Esophagus squamous epithelium (tissue), 5 donors: ENCODE measurements at regions of chr12 and their contacts with region 1.

Region 1: DNA sequence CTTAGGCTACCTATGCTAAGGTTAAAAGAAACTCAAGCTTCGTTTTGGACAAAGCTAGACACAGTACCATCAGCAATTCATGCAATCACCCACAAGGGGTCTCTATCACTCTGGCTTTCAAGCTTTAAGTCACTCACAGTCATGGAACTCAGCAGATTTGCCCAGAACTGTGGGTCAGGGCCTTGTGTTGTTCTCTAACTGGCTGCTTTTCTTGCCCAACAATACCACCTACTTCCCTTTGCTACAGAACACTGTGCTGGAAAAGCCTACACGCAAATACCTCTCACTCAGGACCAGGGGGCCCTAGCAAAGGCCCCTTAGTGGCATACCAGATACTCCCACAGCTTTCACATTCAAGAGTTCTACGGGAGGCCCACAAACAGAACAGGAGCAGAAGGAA is 9.1 kb downstream of the NEMP1 start:
- DNase-seq: no peak
- H3K4me3 ChIP-seq: no peak overlapping the region
- H3K27ac ChIP-seq: peak overlapping the region; percentile 41 to 79 (median 76)
- H3K4me1 ChIP-seq: peaks cover 6 to 37% (median 11%) of the 10 kb centered on the region in 3 donors
- H3K27me3 ChIP-seq: no peaks in the 10 kb centered on the region
- CTCF ChIP-seq: peak; percentile 76 to 95 (median 90)
- POLR2A ChIP-seq: no peak

Region 2: DNA sequence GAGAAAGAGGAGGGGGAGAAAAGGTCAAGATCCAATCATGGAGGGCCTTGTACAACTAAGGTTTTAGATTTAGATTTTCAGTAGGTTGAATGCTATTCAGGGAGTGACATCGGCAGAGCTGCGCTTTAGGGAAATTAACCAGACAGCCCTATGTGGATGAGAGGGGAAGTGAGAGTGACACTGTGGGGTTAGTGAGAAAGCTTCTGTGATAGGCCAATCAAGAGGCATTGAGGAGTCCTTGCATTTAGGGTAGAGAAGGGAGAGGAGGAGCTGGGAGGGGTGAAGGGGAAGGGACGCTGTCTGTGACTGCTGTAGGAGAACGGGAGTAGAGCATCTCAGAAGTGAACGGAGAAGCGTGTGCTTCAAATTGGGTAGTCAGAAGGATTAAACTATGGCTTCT is 303.0 kb before region 1 on chr12:
- intact Hi-C with region 1: loop called (anchors 10 kb)
- DNase-seq: no peak
- H3K4me3 ChIP-seq: peak overlapping the region in 1 of 4 donors; percentile 1
- H3K27ac ChIP-seq: no peak overlapping the region
- H3K4me1 ChIP-seq: peaks cover 0 to 18% (median 5%) of the 10 kb centered on the region in 3 donors
- H3K27me3 ChIP-seq: no peaks in the 10 kb centered on the region
- CTCF ChIP-seq: no peak
- POLR2A ChIP-seq: no peak

Region 3: GRCh38 chr12:57112492-57113294 is 43.2 kb after region 1 on chr12:
- intact Hi-C with region 1: loop called (anchors 2 kb)
- DNase-seq: no peak
- H3K4me3 ChIP-seq: peak overlapping the region in 3 of 4 donors; percentile 68 to 79 (median 69)
- H3K27ac ChIP-seq: peak overlapping the region; percentile 98 to 99 (median 99)
- H3K4me1 ChIP-seq: peaks cover 26 to 44% (median 31%) of the 10 kb centered on the region in 3 donors
- H3K27me3 ChIP-seq: no peaks in the 10 kb centered on the region
- CTCF ChIP-seq: peak in 4 of 6 experiments; percentile 69 to 95 (median 87)
- POLR2A ChIP-seq: no peak

Region 4: DNA sequence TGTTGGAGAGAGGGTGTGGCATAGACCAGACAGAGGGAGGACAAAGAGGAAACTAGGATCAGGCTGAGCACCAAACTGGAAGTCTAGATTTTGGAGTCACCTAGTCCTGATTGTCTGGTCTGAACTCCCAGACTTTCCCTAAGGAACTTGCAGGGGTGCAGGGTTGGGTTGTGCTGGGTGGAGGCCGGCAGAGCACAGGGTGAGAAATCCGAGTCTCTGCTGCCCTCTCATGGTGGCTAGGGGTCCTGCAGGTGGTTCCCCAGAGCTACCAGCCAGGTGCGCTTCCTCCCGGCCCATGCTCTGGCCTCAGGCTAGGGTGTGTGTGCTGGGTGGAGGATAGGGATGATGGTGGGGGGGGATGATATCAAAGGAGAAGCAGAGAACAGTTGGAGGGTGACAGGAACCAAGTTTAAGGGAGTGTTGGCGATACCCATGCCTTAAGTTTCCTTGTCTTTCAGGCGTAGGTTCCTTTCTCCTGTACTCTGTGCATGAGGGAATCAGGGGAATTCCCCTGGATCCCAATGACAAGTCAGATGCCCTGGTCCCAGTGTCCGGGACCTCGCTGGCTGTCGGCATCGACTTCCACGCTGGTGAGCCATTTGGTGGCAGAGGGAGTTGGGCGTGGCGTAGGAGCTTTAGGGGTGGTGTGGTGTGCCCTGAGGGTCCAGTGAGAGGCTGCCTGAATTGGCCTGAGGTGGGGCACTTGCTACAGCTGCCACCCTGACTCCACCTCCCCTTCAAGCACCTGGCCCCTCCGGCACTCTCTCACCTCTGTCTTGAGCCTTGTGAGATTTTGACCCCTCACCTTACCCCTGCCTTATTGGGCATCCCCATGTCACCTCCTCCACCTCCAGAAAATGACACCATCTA is 113.6 kb after region 1 on chr12:
- intact Hi-C with region 1: loop called (anchors 5 kb)
- DNase-seq: no peak
- H3K4me3 ChIP-seq: no peak overlapping the region
- H3K27ac ChIP-seq: peak overlapping the region in 3 of 4 donors; percentile 60 to 87 (median 71)
- H3K4me1 ChIP-seq: peaks cover 6 to 52% (median 13%) of the 10 kb centered on the region in 3 donors
- H3K27me3 ChIP-seq: no peaks in the 10 kb centered on the region
- CTCF ChIP-seq: peak; percentile 85 to 98 (median 94)
- POLR2A ChIP-seq: no peak